Testis (tissue), 5 donors: ENCODE measurements at regions of chr11 and their contacts with region 1.

Region 1: DNA sequence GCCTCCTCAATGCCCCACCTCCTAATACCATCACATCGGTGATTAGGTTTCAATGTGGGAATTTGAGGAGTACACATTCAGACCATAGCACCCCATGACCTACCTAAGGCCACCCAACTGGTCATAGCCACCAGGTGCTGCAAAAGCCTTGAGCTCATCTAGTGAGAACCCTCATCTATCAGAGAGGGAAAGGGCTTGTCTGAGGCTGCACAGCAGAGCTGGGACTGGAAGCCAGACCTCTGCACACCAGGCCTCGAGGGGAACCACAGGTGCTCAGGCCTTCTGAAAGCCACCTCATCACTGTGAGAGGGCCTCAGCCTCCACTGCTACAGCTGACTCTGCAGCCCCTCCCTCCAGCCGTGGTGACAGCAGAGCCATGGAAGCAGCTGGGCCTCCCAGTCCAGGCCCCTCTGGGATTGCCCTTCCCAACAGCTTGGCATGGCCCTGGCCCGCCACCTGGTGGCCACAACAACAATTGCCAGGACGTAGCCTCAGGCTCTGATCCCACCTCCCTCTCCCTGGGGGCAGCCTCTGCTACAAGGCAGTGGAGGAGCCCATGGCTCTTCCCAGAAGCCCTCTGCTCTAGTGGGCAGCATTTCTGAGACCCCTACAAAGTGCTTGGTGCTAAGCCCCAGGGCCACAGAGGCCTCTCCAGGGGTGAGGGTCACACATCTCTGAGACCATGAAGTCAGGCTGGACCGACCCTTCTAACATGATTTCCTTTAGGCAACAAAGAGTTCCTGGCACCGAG is 41.0 kb upstream of the PRDM11 start:
- DNase-seq: peak; percentile 76
- H3K4me3 ChIP-seq: no peak overlapping the region
- H3K27ac ChIP-seq: no peak overlapping the region
- H3K4me1 ChIP-seq: peaks cover 8% of the 10 kb centered on the region
- H3K27me3 ChIP-seq: no peaks in the 10 kb centered on the region
- CTCF ChIP-seq: peak; percentile 90 to 91 (median 91)
- POLR2A ChIP-seq: no peak

Region 2: GRCh38 chr11:44936525-44936924 is 168.9 kb before region 1 on chr11:
- intact Hi-C with region 1: loop called (anchors 2 kb)
- DNase-seq: peak; percentile 93
- H3K4me3 ChIP-seq: no peak overlapping the region
- H3K27ac ChIP-seq: no peak overlapping the region
- H3K4me1 ChIP-seq: peaks cover 3% of the 10 kb centered on the region
- H3K27me3 ChIP-seq: no peaks in the 10 kb centered on the region
- CTCF ChIP-seq: peak; percentile 95 to 98 (median 96)
- POLR2A ChIP-seq: no peak

Region 3: DNA sequence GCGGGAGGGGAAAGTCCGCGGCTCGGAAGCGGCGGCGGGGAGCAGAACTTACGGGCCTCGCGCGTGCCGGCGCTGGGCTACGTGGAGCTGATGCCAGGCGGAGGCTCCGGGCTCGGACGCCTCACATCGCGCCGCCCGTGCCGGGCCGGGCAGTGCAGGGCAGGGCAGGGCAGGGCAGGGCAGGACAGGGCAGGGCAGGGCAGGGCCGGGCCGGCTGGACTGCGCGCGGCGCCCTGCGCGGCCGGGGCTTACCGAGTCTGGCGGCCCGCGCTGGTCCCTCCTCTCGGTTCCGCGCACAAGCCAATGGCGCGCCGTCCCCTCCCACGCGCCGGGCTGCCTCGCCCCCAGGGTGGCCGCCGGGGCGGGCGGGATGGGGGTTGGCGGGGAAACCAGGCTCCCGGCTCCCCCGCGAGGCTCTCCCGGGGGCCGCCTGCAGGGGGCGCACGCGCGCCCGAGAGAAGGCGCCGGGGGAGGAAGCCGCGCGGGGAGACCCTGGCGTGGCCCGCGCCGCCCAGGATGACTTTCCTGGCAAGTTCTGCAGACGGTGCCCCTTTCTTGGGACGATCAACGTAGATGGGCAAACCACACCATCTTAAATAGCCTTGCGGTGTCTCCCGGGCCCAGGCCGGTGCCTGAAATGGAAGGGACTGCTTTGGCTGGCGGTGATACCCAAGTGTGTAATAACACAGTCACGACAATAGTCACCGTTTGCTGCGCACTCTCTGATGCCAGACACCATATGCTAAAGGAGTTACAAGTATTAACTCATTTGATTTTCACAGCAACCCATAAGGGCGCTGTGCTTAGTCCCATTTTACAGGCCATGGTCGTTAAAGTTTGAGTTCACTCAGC is 154.6 kb before region 1 on chr11 and contains the start of gene TP53I11:
- intact Hi-C with region 1: no loop called
- DNase-seq: peak; percentile 71
- H3K4me3 ChIP-seq: peak within 1 kb of the TSS; percentile 64 to 68
- H3K27ac ChIP-seq: peak within 1 kb of the TSS; percentile 44 to 61
- H3K4me1 ChIP-seq: peaks cover 5% of the 10 kb centered on the region
- H3K27me3 ChIP-seq: no peaks in the 10 kb centered on the region
- CTCF ChIP-seq: peak in 2 of 3 experiments; percentile 24 to 77
- POLR2A ChIP-seq: no peak
- total RNA-seq, gene TP53I11: 19.9 to 28.7 TPM

Region 4: GRCh38 chr11:45158198-45158731 is 52.9 kb after region 1 on chr11:
- intact Hi-C with region 1: no loop called
- DNase-seq: no peak
- H3K4me3 ChIP-seq: no peak overlapping the region
- H3K27ac ChIP-seq: peak overlapping the region in 1 of 2 donors; percentile 53
- H3K4me1 ChIP-seq: peaks cover 47% of the 10 kb centered on the region
- H3K27me3 ChIP-seq: no peaks in the 10 kb centered on the region
- CTCF ChIP-seq: no peak
- POLR2A ChIP-seq: no peak

Region 5: GRCh38 chr11:45294499-45294898 is 189.1 kb after region 1 on chr11:
- intact Hi-C with region 1: loop called (anchors 5 kb)
- DNase-seq: no peak
- H3K4me3 ChIP-seq: no peak overlapping the region
- H3K27ac ChIP-seq: no peak overlapping the region
- H3K4me1 ChIP-seq: no peaks in the 10 kb centered on the region
- H3K27me3 ChIP-seq: no peaks in the 10 kb centered on the region
- CTCF ChIP-seq: no peak
- POLR2A ChIP-seq: no peak

Region 6: DNA sequence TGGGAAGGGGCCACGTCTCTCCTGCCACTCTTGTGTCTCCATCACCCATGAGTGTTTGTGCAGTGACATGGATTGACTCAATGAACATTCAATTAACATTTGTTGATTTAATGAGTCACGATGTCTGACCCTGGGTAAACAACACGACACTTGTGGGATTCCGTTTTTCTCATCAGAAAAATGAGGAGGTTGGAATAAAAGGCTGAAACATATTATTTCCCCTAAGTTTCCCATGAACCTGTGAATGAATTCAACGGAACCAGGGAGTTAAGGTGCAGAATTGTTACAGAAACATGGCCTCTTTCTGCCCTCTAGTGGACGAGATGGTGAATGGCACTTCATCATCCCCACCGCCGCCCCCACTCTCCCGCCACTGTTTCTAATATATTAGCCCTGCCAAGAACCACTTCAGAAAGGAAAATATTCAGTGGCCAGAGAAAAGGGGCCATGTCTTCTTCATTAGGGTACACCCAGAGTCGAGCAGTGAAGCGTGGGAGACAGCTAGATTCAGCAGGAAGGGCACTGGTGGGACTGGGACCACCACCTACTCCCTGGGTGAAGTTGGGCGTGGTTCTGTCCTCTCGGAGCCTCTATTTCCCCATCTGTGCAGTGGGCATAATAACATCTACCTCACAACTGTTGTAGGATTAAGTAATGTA is 227.0 kb after region 1 on chr11:
- intact Hi-C with region 1: loop called (anchors 5 kb)
- DNase-seq: peak; percentile 45
- H3K4me3 ChIP-seq: no peak overlapping the region
- H3K27ac ChIP-seq: no peak overlapping the region
- H3K4me1 ChIP-seq: no peaks in the 10 kb centered on the region
- H3K27me3 ChIP-seq: no peaks in the 10 kb centered on the region
- CTCF ChIP-seq: peak in 2 of 3 experiments; percentile 54 to 90
- POLR2A ChIP-seq: no peak